Naive thymus-derived CD8-positive, alpha-beta T cell (primary cell): ENCODE measurements at regions of chrX and their contacts with region 1.

Region 1: DNA sequence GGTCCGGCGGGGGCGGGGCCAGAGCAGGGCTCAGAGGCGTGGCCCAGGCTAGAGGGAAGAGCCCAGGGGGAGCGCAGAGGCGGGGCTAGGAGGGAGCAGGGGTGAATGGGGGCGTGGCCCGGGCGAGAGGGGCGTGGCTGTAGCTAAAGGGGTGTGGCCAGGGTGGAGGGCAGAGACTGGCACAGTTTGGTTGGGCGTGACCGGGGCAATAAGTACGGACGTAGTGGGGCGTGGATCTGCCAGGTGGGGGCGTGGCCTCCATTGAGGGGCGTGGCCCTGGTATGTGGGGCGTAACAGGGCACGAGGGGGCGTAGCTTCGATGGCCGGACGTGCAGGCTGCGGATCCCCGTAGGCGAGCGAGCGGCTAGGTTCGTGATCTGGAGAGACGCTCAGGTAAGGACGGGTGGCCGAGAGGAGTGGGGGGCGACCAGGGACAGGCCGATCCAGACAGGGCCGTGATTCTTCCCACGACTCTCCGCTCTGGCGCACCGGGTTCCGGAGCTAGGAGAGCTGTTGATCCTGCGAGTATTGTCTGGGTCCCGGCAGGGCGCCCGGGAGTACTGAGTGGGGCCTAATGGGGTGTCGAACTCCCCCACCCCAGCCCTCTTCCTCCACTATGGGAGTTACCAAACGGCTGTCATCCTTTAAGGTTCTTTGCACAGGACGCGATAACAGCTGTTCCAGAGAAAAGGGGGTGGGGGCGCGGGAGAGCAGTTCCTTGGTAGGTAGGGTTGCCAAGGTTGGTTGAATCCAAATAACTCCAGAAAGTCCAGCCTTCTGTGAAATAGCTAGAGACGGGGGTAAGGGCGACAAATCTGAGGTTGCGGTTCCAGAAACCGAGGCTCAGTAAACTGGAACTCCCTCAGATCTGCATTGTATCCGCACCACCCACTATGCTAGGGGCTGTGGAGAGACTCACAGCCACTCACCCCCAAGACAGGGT is at the start of gene CA5B:
- DNase-seq: peak; percentile 90 to 100 (median 97)
- ATAC-seq: peak; percentile 89 to 91
- H3K4me3 Mint-ChIP-seq: peak within 1 kb of the TSS; percentile 88 to 97 (median 92)
- H3K27ac Mint-ChIP-seq: peak within 1 kb of the TSS; percentile 54 to 96 (median 92)
- H3K4me1 Mint-ChIP-seq: peaks cover 13 to 51% (median 45%) of the 10 kb centered on the region in 4 donors
- H3K27me3 Mint-ChIP-seq: no peaks in the 10 kb centered on the region
- polyA plus RNA-seq, gene CA5B: 44.2 to 69.4 (median 62.1) TPM

Region 2: DNA sequence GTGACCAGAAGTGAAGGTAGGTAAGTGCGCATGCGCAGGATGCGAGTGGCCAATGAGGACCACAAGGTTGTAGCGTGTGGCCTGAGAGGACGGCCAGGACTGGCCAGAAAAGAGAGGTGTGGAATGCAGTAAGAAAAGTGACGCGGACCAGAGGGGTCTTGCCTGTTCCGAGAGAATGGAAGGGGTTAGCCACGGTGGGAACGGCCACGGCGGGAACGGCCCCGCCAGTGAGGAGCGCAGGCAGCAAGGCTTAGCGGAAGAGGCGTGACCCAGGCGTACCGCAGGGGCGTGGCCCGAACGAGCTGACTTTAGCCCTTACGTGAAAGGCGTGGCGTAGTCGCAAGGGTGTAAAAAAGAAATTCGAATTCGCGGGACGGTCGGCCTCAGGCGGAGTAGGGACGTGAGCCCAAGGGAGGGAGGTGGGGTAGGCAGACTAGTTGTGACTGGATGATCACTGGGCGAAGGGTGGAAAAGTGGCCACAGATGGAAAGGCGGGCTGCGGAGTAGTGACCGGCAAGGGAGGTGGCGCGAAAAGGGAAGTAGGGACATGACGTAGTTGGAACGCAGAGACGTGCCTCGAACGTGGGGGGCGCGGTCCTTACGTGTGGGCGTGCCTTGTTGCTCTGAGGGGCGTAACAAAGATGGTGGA is 63.3 kb before region 1 on chrX:
- POLR2A ChIA-PET with region 1: interaction called, 17 read pairs
- DNase-seq: peak; percentile 70 to 100 (median 87)
- ATAC-seq: peak; percentile 83 to 84
- H3K4me3 Mint-ChIP-seq: no peak overlapping the region
- H3K27ac Mint-ChIP-seq: no peak overlapping the region
- H3K4me1 Mint-ChIP-seq: peaks cover 0 to 16% (median 7%) of the 10 kb centered on the region in 4 donors
- H3K27me3 Mint-ChIP-seq: no peaks in the 10 kb centered on the region

Region 3: DNA sequence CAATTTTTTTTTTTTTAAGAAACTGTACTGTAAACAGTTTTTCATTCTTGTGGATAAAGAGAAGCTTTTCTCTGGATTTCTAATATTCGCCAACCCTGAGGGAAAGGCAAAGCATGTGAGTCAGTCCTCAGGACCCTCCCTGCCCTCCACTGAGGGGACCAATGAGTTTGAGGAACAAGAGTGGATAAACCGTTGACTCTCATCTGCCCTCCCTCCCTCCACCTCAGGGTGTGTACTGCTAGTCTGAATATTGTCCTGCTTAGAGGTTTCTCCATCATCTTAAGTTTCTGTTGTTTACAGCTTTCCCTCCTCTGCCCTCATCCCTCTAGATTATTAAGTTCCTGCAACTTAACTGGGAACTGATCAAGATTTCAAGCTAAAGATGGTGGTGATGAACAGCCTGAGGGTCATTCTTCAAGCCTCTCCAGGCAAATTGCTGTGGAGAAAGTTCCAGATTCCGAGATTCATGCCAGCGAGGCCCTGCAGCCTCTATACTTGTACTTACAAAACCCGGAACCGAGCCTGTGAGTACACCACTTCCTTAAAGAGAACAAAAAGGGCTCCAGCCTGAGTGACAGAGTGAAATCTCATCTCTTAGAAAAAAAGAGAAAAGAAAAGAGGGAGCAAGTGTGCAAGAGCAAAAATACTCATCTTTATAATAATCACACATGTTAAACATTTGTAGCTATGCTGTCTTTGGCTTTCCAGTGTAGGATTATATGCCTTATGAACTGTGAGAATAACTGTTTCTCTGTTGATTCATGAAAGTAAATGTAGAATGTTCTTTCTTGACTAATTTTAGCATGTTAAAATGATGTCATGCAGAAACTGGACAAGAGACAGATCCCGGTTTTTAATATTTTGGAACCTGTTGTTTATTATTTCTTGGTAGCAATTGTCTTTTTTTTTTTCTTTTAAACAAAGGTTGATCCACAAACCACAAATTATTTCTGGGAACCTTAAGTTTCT is 11.7 kb after region 1 on chrX:
- POLR2A ChIA-PET with region 1: interaction called, 141 read pairs
- DNase-seq: peak in 6 of 10 donors; percentile 31 to 66 (median 53)
- ATAC-seq: peak; percentile 51 to 52
- H3K4me3 Mint-ChIP-seq: peak overlapping the region; percentile 60 to 86 (median 76)
- H3K27ac Mint-ChIP-seq: peak overlapping the region; percentile 95 to 100 (median 98)
- H3K4me1 Mint-ChIP-seq: peaks cover 16 to 92% (median 72%) of the 10 kb centered on the region in 4 donors
- H3K27me3 Mint-ChIP-seq: no peaks in the 10 kb centered on the region

Region 4: DNA sequence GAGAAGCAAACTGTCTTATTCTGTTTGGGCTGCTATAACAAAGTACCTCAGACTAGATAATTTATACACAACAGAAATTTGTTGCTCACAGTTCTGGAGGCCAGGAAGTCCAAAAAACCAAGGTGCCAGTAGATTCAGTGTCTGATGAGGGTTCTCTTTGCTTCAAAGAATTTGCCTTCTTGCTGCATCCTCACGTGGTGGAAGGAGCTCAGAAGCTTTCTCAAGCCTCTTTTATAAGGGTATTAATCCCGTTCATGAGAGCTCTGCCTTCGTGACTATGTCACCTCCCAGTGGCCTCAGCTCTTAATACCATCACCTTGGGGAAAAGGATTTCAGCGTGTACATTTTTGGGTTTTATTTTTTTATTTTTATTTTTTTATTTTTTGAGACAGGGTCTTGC is 19.9 kb after region 1 on chrX:
- POLR2A ChIA-PET with region 1: interaction called, 141 read pairs
- DNase-seq: peak in 8 of 10 donors; percentile 15 to 67 (median 40)
- ATAC-seq: peak; percentile 84 to 96
- H3K4me3 Mint-ChIP-seq: peak overlapping the region in 9 of 10 donors; percentile 16 to 77 (median 41)
- H3K27ac Mint-ChIP-seq: peak overlapping the region; percentile 73 to 96 (median 92)
- H3K4me1 Mint-ChIP-seq: peaks cover 19 to 61% (median 53%) of the 10 kb centered on the region in 4 donors
- H3K27me3 Mint-ChIP-seq: no peaks in the 10 kb centered on the region

Region 5: DNA sequence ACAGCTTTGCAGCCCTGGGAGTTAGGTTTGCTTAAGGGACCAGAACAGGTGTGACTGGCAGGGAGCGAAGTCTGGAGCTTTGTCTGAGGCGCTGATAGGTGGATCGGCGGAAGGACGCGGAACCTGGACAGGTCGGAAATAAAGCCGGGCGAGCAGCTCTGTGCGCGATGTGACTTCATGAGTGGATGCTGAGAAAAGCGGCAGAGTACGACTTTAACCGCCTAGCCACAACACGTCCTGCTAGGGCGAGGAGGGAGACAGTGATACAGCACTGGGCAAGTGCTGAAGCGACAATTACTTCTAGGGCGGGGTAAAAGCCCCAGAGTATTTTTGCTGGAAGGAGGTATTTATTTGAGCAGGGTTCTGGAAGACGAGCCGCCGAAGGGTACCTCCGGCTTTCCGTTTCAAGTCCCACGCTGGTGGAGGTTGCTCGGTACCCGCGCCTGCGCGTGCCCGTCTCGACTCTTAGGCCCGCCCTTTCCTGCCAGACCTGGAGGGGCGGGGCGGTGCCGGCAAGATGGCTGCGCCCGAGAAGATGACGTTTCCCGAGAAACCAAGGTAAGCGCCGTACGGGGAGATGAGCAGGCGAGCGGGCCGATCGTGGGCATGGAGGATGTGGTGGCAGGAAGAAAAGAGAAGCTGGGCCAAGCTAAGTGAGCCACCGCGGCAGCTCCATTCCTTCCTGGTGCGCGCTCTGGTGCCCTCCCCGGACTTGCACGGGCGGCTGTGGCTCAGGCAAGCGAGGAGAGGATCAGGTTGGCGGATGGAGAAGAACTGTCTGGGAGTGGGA is 51.9 kb after region 1 on chrX and contains the start of gene ZRSR2:
- POLR2A ChIA-PET with region 1: interaction called, 28 read pairs
- DNase-seq: peak; percentile 76 to 95 (median 86)
- ATAC-seq: peak; percentile 86 to 87
- H3K4me3 Mint-ChIP-seq: no peak within 1 kb of the TSS
- H3K27ac Mint-ChIP-seq: no peak within 1 kb of the TSS
- H3K4me1 Mint-ChIP-seq: peaks cover 6 to 23% (median 22%) of the 10 kb centered on the region in 4 donors
- H3K27me3 Mint-ChIP-seq: no peaks in the 10 kb centered on the region
- polyA plus RNA-seq, gene ZRSR2: 15.1 to 44.8 (median 27.7) TPM

Region 6: GRCh38 chrX:15854712-15855567 is 116.7 kb after region 1 on chrX and contains the start of gene AP1S2:
- POLR2A ChIA-PET with region 1: interaction called, 10 read pairs
- DNase-seq: peak; percentile 88 to 99 (median 93)
- ATAC-seq: peak; percentile 93
- H3K4me3 Mint-ChIP-seq: peak within 1 kb of the TSS; percentile 90 to 99 (median 94)
- H3K27ac Mint-ChIP-seq: peak within 1 kb of the TSS; percentile 93 to 100 (median 98)
- H3K4me1 Mint-ChIP-seq: peaks cover under 1 to 28% (median 13%) of the 10 kb centered on the region in 4 donors
- H3K27me3 Mint-ChIP-seq: no peaks in the 10 kb centered on the region
- polyA plus RNA-seq, gene AP1S2: 31.2 to 47.8 (median 35.3) TPM